Naive thymus-derived CD4-positive, alpha-beta T cell (primary cell): ENCODE measurements at regions of chr9 and their contacts with region 1.

Region 1: GRCh38 chr9:27276193-27277030 is 20.5 kb downstream of the EQTN start:
- DNase-seq: peak in 6 of 9 donors; percentile 27 to 51 (median 45)
- ATAC-seq: peak; percentile 48
- H3K4me3 ChIP-seq: no peak overlapping the region
- H3K4me3 Mint-ChIP-seq: peak overlapping the region in 2 of 10 donors; percentile 6 to 8
- H3K27ac ChIP-seq: no peak overlapping the region
- H3K27ac Mint-ChIP-seq: no peak overlapping the region
- H3K4me1 ChIP-seq: no peaks in the 10 kb centered on the region
- H3K4me1 Mint-ChIP-seq: peaks cover 0 to 5% (median 4%) of the 10 kb centered on the region in 7 donors
- H3K27me3 ChIP-seq: no peaks in the 10 kb centered on the region
- H3K27me3 Mint-ChIP-seq: peaks cover 0 to 10% (median 5%) of the 10 kb centered on the region in 5 donors

Region 2: DNA sequence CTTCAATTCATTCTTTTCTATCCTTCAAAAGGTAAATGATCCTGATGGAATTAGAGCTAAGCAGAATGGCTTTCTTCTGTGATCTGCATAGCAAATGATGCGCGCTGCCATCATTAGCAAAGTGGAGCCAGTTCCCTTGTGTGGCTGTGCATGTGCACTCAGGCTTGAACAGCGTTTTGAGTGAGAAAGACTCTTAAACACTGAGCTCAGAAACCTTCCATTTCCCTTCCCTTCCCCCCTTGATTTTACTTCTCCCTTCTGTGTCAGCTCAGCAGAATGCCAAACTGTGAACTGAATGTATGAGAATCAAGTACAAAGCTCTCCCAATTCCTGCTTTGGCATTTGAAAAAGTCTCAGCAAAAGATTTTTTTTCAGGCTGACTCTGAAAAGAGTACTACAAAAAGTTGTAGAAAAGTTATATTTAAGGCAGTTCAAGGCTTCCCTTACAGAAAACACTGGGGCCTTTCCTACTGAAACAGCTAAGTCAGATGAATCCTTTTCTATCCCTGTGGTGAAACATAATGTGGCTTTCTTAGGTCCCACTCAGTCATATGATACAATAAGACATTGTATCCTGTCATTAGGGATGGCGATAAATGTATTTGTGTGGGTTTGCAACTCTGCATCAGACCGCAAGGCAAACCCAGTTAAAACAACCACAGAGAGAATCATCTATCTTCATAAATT is 606.6 kb before region 1 on chr9:
- CTCF ChIA-PET with region 1: no interaction called
- POLR2A ChIA-PET with region 1: no interaction called
- intact Hi-C with region 1: no loop called
- DNase-seq: no peak
- ATAC-seq: no peak
- H3K4me3 ChIP-seq: no peak overlapping the region
- H3K4me3 Mint-ChIP-seq: no peak overlapping the region
- H3K27ac ChIP-seq: no peak overlapping the region
- H3K27ac Mint-ChIP-seq: no peak overlapping the region
- H3K4me1 ChIP-seq: no peaks in the 10 kb centered on the region
- H3K4me1 Mint-ChIP-seq: no peaks in the 10 kb centered on the region
- H3K27me3 ChIP-seq: no peaks in the 10 kb centered on the region
- H3K27me3 Mint-ChIP-seq: peaks cover 0 to 13% (median 0%) of the 10 kb centered on the region in 5 donors

Region 3: GRCh38 chr9:26955921-26956859 is 320.2 kb before region 1 on chr9 and contains the start of gene IFT74:
- CTCF ChIA-PET with region 1: no interaction called
- POLR2A ChIA-PET with region 1: no interaction called
- intact Hi-C with region 1: loop called in 1 of 2 experiments (anchors 5 kb)
- DNase-seq: peak; percentile 84 to 97 (median 93)
- ATAC-seq: peak; percentile 100
- H3K4me3 ChIP-seq: peak within 1 kb of the TSS; percentile 76
- H3K4me3 Mint-ChIP-seq: peak within 1 kb of the TSS; percentile 80 to 99 (median 95)
- H3K27ac ChIP-seq: peak within 1 kb of the TSS; percentile 82
- H3K27ac Mint-ChIP-seq: peak within 1 kb of the TSS; percentile 91 to 98 (median 96)
- H3K4me1 ChIP-seq: peaks cover 0 to 3% of the 10 kb centered on the region in 2 donors
- H3K4me1 Mint-ChIP-seq: peaks cover 13 to 47% (median 38%) of the 10 kb centered on the region in 7 donors
- H3K27me3 ChIP-seq: no peaks in the 10 kb centered on the region
- H3K27me3 Mint-ChIP-seq: no peaks in the 10 kb centered on the region
- total RNA-seq, gene IFT74: 8.0 to 11.6 (median 9.7) TPM

Region 4: DNA sequence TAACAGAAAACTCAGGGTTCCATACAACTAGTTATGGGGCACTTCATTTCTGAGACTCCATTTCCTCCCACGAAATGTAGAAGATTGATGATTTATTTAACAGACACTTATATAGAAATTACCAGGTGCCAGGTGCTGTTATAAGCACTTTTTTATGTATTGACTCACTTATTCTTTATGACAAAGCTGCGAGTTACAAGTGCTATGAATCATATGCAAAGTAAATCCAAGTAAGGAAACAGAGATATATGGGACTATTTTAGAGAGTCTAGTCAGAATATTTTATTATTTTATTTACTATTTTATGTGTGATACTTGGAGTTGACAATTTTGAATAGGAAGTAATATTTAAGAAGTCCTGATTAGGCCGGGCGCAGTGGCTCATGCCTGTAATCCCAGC is 1119.6 kb after region 1 on chr9:
- CTCF ChIA-PET with region 1: no interaction called
- POLR2A ChIA-PET with region 1: no interaction called
- intact Hi-C with region 1: no loop called
- DNase-seq: no peak
- ATAC-seq: no peak
- H3K4me3 ChIP-seq: no peak overlapping the region
- H3K4me3 Mint-ChIP-seq: no peak overlapping the region
- H3K27ac ChIP-seq: no peak overlapping the region
- H3K27ac Mint-ChIP-seq: no peak overlapping the region
- H3K4me1 ChIP-seq: no peaks in the 10 kb centered on the region
- H3K4me1 Mint-ChIP-seq: no peaks in the 10 kb centered on the region
- H3K27me3 ChIP-seq: no peaks in the 10 kb centered on the region
- H3K27me3 Mint-ChIP-seq: no peaks in the 10 kb centered on the region